PC-9 (cell line): ENCODE measurements at regions of chr6 and their contacts with region 1.

Region 1: DNA sequence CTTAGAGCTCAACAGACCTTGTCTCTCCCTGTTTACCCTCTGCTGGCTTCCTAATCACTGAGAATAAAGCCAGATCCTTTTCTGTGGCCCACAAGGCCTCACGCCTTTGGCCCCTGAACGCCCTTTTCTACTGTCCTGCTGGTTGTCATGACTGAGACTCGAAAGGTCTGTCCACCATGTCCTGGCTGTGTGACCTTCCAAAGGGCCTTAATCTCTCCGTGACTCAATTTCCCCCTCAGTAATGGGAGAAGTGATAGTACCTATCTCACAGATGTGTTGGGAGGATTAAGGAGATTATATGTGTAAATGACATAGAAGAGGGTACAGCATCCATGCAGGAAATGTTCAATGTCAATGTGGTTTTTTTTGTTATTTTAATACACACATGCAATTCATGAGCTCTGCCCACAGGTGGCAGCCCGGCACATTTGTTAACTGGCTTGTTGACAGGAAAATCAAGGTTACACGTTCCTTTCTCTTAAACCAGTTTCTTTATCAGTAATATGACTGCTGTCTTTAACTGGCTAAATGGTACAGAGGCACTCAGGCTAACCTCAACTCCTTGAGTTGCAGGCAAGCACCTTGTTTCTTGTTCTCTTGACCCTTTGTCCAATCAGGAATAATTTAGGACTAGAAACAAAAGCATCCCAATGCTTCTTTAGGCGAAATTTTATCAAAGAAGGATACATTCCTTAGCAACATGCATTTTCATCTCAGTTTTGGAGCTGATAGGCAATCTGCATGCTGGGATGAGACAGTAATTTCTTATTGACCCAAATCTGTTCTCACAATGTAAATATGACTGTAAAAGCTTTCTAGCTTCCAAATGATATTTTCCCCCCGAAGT is 16.6 kb downstream of the SLC22A1 start:
- DNase-seq: peak; percentile 34 to 53
- H3K4me3 ChIP-seq: no peak overlapping the region
- H3K27ac ChIP-seq: no peak overlapping the region
- H3K4me1 ChIP-seq: peaks cover 22% of the 10 kb centered on the region
- H3K27me3 ChIP-seq: no peaks in the 10 kb centered on the region
- CTCF ChIP-seq: peak; percentile 84

Region 2: DNA sequence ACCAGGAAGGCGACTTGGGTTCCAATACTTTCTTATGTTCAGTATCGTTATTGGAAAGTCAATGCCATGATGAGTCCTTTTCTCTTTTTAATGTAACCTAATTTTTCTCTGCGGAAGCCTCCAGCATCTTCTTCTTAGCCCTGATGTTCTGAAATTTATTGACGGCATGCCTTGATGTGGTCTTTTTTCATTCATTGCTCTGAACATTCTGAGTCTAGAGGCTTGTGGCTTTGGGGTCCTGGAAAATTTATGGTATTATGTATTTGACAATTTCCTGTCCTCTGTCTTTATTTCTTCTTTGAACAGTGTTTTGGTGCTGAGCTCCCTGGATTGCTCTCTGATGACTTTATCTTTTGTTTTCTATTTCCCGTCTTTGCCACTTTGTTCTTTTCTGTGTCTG is 276.1 kb before region 1 on chr6:
- CTCF ChIA-PET with region 1: no interaction called
- POLR2A ChIA-PET with region 1: no interaction called
- intact Hi-C with region 1: loop called (anchors 1 kb)
- DNase-seq: no peak
- H3K4me3 ChIP-seq: no peak overlapping the region
- H3K27ac ChIP-seq: no peak overlapping the region
- H3K4me1 ChIP-seq: no peaks in the 10 kb centered on the region
- H3K27me3 ChIP-seq: 0 out of 2 replicates have a peak, but pooled peaks cover 5% of the 10 kb centered on the region
- CTCF ChIP-seq: no peak

Region 3: DNA sequence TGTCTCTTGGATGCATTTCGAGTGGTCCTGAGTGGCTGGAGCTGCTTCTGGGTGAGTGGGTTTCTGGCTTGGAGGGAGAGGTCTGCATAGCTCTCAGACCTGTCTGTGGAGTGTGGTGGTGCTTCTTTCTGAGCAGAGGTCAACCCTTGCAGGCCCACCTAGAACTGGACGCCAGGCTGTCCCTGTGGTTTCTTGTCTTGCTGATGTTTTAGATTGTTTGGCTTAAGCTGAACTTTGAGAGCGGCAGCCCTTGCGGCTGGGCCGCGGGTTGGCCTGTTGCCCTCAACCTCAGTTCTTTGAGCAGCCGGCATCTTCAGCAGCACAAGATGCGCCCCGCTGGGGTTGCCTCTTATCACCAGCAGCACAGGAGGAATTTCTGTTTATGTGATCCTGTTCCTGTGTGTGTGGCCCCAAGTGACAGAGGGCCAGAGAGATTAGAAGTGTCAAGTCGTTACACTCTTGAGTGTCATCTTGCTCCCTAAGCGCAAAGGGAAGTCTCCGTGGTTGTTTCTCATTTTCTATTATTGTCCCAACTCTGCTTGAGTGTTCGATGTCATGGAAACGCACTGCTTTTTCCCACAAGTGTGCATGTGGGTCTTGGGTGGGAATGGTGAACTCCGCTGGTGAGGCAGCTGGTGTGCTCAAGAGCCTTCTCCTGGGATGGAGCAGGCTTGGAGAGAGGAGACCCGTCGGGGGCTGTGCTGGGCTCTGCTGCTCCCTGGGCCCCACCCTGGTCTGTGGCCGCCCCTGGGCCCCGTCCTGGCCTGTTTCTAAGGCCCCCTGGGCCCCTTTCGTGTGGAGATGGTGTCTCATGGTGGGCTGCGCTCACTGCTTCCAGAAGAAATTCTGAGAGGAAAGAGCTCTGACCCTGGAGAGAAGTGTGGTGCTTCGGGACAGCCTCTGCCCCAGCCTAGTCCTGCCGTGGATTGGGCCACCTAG is 36.7 kb before region 1 on chr6:
- CTCF ChIA-PET with region 1: no interaction called
- POLR2A ChIA-PET with region 1: no interaction called
- intact Hi-C with region 1: no loop called
- DNase-seq: no peak
- H3K4me3 ChIP-seq: no peak overlapping the region
- H3K27ac ChIP-seq: no peak overlapping the region
- H3K4me1 ChIP-seq: no peaks in the 10 kb centered on the region
- H3K27me3 ChIP-seq: no peaks in the 10 kb centered on the region
- CTCF ChIP-seq: no peak